ENCODE measurements at regions of chr3 and their contacts with region 1.

Region 1: GRCh38 chr3:49411968-49412631 is at the starts of genes RHOA and TCTA:
- DNase-seq: peak; percentile 99
- H3K4me3 Mint-ChIP-seq: peak within 1 kb of the TSS; percentile 98
- H3K27ac Mint-ChIP-seq: peak within 1 kb of the TSS; percentile 99
- H3K4me1 Mint-ChIP-seq: peaks cover 68% of the 10 kb centered on the region
- H3K27me3 Mint-ChIP-seq: peaks cover 2% of the 10 kb centered on the region
- total RNA-seq, gene RHOA: 504 to 505 TPM
- total RNA-seq, gene TCTA: 19.7 to 22.4 TPM

Region 2: DNA sequence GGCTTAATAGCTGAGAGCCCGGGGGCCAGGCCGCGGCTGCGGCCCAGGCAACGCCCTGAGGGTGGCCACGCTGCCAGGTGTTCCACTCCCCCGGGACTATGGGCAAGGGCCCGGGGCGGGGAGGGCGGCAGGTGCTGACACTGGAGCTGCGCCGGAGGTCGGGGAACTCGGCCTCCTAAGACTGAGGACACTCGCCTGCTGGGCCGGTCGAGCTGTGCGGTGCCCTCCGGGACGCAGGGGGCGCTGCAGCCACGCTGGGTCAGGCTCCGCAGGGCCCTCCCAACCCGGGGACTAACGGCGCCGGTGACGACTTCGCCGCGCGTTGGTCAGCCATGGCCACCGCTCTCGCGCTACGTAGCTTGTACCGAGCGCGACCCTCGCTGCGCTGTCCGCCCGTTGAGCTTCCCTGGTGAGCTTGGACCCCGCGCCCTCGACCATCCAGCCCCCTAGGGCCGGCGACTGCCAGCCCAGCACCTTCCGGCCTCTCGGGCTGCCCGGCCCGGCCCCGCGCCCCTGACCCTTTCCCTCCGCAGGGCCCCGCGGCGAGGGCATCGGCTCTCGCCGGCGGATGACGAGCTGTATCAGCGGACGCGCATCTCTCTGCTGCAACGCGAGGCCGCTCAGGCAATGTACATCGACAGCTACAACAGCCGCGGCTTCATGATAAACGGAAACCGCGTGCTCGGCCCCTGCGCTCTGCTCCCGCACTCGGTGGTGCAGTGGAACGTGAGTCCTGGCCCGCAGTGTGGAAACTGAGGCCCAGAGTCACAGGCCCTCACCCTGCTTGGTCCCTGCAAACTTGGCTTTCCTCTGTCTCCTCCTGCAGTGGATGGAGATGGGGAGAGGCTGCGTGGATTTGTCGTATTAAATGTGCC is 390.1 kb before region 1 on chr3 and contains the start of gene NDUFAF3:
- CTCF ChIA-PET with region 1: interaction called, 4 read pairs
- POLR2A ChIA-PET with region 1: interaction called, 10 read pairs
- DNase-seq: peak; percentile 93
- H3K4me3 Mint-ChIP-seq: peak within 1 kb of the TSS; percentile 98
- H3K27ac Mint-ChIP-seq: peak within 1 kb of the TSS; percentile 98
- H3K4me1 Mint-ChIP-seq: peaks cover 67% of the 10 kb centered on the region
- H3K27me3 Mint-ChIP-seq: no peaks in the 10 kb centered on the region
- total RNA-seq, gene NDUFAF3: 98.1 to 108 TPM

Region 3: GRCh38 chr3:49358217-49358883 is 53.8 kb before region 1 on chr3 and contains the start of gene GPX1:
- CTCF ChIA-PET with region 1: interaction called, 3 read pairs
- POLR2A ChIA-PET with region 1: interaction called, 21 read pairs
- DNase-seq: peak; percentile 84
- H3K4me3 Mint-ChIP-seq: peak within 1 kb of the TSS; percentile 90
- H3K27ac Mint-ChIP-seq: peak within 1 kb of the TSS; percentile 86
- H3K4me1 Mint-ChIP-seq: peaks cover 39% of the 10 kb centered on the region
- H3K27me3 Mint-ChIP-seq: no peaks in the 10 kb centered on the region
- total RNA-seq, gene GPX1: 71.5 to 76.8 TPM

Region 4: DNA sequence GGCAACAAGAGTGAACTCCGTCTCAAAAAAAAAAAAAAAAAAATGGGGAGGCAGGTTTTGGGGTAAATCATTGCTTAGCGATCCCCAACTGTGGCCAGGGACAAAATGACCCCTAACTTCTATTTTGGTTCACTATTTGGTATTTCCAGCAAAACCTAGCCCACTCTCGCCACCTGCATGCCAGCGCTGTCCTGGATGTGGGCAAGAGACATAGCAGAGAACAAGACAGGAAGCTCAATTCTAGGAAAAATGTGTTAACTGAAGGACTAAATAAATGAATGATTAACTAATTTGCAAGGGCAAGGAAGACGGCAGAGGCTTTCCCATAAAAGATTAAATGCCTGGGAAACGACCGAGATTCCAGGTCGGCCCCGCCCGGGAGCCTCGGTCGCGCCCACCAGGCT is 16.6 kb after region 1 on chr3:
- CTCF ChIA-PET with region 1: interaction called, 28 read pairs
- POLR2A ChIA-PET with region 1: interaction called, 79 read pairs
- DNase-seq: no peak
- H3K4me3 Mint-ChIP-seq: peak overlapping the region; percentile 82
- H3K27ac Mint-ChIP-seq: peak overlapping the region; percentile 95
- H3K4me1 Mint-ChIP-seq: peaks cover 36% of the 10 kb centered on the region
- H3K27me3 Mint-ChIP-seq: no peaks in the 10 kb centered on the region

Region 5: DNA sequence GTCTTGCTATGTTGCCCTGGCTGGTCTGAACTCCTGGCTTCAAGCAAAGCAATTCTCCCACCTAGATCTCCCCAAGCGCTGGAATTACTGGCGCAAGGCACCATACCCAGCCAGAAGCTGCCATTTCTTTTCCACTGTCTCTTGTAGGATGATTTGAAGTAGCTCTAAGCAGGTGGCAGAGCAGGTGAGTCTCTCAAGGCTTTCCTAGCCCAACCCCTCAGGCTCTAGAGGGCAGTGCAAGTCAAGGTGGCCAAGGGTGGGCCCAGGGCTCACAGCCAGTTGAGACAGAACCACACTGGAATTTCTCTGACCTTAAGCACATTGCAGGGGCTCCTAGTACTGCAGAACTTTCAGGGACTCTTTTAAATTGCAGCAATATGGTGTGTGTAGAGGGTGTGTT is 42.4 kb after region 1 on chr3:
- CTCF ChIA-PET with region 1: interaction called, 46 read pairs
- POLR2A ChIA-PET with region 1: interaction called, 16 read pairs
- DNase-seq: no peak
- H3K4me3 Mint-ChIP-seq: no peak overlapping the region
- H3K27ac Mint-ChIP-seq: no peak overlapping the region
- H3K4me1 Mint-ChIP-seq: no peaks in the 10 kb centered on the region
- H3K27me3 Mint-ChIP-seq: no peaks in the 10 kb centered on the region